Thyroid gland (tissue), 4 donors: ENCODE measurements at regions of chr12 and their contacts with region 1.

Region 1: DNA sequence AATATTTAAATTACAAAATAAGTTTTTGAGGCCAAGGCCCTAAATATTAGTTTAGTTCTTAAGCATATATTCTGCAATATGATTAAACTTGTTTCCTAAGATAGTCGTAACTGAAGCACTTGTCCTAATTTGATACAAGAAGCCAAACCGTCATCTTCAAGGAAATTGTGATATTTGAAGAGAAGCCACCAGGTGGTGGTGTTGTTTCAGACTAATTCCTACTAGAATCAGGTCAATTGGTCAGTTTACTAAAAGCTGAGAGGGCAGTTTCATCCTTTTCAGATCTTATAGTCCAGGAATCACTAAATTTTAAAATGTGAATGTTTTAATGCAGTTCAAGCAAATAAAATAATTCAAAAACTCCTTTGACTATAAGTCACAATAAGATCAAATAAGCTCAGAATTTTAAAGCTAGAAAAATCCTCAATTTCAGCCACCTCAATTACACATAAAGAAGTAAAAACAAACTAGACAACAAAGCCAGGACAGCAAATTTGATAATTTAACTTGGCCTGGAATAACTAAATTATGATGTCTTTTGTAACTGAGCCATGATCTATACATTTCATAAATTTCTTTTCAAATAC is 7.1 kb upstream of the ARL1 start:
- DNase-seq: peak; percentile 18 to 21
- H3K4me3 ChIP-seq: no peak overlapping the region
- H3K27ac ChIP-seq: no peak overlapping the region
- H3K4me1 ChIP-seq: no peaks in the 10 kb centered on the region
- H3K27me3 ChIP-seq: no peaks in the 10 kb centered on the region
- CTCF ChIP-seq: peak in 5 of 6 experiments; percentile 17 to 68 (median 51)
- POLR2A ChIP-seq: no peak

Region 2: DNA sequence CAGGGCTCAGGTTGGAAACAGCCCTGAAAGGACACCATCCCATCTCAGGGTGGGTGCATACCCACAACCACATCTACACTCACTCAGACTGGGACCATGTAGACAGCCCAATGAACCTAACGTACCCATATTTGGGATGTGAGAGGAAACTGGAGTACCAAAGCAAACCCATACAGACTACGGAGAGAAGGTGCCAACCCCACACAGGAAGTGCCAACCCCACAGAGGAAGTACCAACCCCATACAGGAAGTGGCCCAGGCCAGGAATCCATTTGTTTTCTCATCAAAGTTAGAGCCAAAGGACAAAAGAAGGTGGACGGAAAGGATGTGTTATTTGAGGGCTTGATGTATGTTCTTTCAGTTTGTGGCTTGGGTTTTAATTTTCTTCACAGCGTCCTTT is 41.1 kb after region 1 on chr12:
- intact Hi-C with region 1: no loop called
- DNase-seq: no peak
- H3K4me3 ChIP-seq: no peak overlapping the region
- H3K27ac ChIP-seq: no peak overlapping the region
- H3K4me1 ChIP-seq: no peaks in the 10 kb centered on the region
- H3K27me3 ChIP-seq: no peaks in the 10 kb centered on the region
- CTCF ChIP-seq: no peak
- POLR2A ChIP-seq: no peak

Region 3: GRCh38 chr12:101773650-101774162 is 359.1 kb after region 1 on chr12:
- intact Hi-C with region 1: loop called (anchors 10 kb)
- DNase-seq: peak; percentile 50 to 62
- H3K4me3 ChIP-seq: no peak overlapping the region
- H3K27ac ChIP-seq: no peak overlapping the region
- H3K4me1 ChIP-seq: no peaks in the 10 kb centered on the region
- H3K27me3 ChIP-seq: no peaks in the 10 kb centered on the region
- CTCF ChIP-seq: peak; percentile 82 to 97 (median 86)
- POLR2A ChIP-seq: no peak